A673 (cell line): ENCODE measurements at regions of chr3 and their contacts with region 1.

Region 1: DNA sequence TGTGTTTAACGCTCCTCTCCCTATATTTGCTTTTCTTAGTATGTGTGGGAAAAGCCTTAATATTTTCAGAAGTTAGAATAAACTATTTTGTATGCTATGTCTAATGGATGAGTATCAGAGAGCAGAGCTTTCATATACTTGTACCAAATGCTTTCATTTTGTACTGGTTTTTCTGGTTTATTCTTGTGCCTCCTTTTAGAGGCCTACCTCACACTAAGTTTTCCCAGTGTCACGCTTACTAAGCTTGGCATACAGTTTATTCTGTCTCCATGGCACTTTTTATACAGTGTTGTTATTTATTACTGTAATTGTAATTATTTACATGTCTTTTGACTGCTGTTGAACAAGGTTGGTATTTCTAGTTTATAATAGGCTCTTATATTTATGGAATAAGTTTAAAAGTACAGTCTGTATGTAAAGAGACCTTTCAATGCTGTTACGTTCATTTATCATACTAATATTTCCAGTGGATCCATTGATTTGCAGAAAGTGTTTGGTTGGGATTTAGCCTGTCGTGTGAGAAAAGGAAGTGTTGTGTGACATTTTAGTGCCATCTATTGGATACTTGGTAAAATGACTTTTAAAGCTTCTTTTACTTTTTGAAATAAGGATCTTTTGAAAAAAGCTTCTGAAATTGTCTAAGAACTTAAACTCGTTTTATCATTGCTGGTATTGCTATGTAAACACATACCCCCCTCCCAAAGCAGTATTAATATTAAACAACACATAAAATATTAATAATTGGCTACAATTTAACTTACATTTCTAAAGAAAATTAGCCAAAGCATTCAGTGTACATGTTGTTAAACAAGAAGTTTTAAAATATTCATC is 5.2 kb upstream of the EBLN2 start:
- DNase-seq: peak; percentile 51
- H3K4me3 ChIP-seq: no peak overlapping the region
- H3K27ac ChIP-seq: no peak overlapping the region
- H3K4me1 ChIP-seq: peaks cover 28% of the 10 kb centered on the region
- H3K27me3 ChIP-seq: no peaks in the 10 kb centered on the region
- CTCF ChIP-seq: peak; percentile 53

Region 2: DNA sequence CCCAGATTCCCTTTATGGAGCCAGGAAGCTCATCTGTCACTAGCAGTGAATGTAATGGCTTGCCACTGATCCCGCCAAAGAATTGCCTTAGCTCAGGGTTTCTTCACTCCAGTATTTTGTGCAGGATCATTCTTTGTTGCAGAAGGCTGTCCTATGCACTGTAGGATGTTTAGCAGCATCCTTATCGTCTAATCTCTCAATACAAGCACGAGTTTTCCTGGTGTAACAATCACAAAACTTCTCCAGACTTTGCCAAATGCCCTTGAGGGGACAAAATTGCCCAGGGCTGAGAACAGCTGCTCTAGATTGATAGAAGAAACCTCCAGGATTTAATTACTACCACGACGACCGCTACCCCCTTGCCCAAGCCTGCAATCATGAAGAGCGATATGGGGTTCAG is 201.2 kb before region 1 on chr3:
- CTCF ChIA-PET with region 1: no interaction called
- POLR2A ChIA-PET with region 1: no interaction called
- intact Hi-C with region 1: loop called (anchors 10 kb)
- DNase-seq: no peak
- H3K4me3 ChIP-seq: no peak overlapping the region
- H3K27ac ChIP-seq: no peak overlapping the region
- H3K4me1 ChIP-seq: no peaks in the 10 kb centered on the region
- H3K27me3 ChIP-seq: no peaks in the 10 kb centered on the region
- CTCF ChIP-seq: no peak

Region 3: GRCh38 chr3:72938471-72939265 is 117.6 kb before region 1 on chr3:
- CTCF ChIA-PET with region 1: no interaction called
- POLR2A ChIA-PET with region 1: no interaction called
- intact Hi-C with region 1: loop called (anchors 2 kb)
- DNase-seq: peak; percentile 62
- H3K4me3 ChIP-seq: no peak overlapping the region
- H3K27ac ChIP-seq: no peak overlapping the region
- H3K4me1 ChIP-seq: peaks cover 7% of the 10 kb centered on the region
- H3K27me3 ChIP-seq: no peaks in the 10 kb centered on the region
- CTCF ChIP-seq: peak; percentile 51